ENCODE measurements at regions of chr2 and their contacts with region 1.

Region 1: DNA sequence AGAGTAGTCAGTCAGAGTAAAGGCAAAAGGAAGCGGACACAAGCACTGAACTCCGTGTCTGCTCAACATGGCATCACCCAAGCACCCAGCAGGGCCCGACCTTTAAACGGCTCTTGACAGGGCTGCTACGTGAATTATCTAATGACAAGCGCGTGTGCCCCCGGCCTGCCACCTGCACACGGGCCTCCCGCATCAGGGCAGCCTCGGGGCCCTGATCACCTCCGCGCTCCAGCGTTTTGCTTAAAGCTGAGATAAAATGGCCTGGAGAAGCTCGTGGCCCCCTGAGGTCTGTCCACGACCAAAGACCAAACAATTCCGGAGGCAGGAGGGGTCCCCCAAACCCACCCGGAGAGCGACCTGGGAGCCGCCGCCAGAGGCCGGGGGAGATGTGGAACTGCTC is 376 bp downstream of the NDUFA10 start:
- DNase-seq: no peak
- ATAC-seq: peak; percentile 23
- H3K4me3 ChIP-seq: peak overlapping the region; percentile 81
- H3K27ac ChIP-seq: no peak overlapping the region
- H3K4me1 ChIP-seq: peaks cover 17% of the 10 kb centered on the region; the same call in 1 of the 2 replicates
- H3K27me3 ChIP-seq: no peaks in the 10 kb centered on the region
- CTCF ChIP-seq: no peak

Region 2: DNA sequence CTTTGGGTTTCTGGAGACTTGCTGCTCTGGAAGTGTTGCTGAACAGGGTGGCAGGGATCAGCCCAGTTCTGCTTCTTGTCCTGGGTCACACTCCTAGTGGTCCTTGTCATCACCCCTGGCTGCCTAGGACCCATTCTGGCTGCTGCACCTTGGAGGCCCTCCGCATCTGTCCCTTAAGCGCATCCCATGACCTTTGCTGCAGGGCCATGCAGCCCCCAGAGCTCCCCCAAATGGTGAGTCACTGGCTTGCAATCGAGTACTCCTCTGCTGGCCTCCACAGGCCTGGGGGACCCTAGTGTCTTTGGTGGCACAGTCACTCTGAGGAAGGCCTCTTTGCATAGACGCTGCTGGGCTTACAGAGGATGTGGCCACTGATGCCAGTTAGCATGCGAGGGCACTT is 1409.6 kb before region 1 on chr2:
- CTCF ChIA-PET with region 1: no interaction called
- POLR2A ChIA-PET with region 1: interaction called, 12 read pairs
- intact Hi-C with region 1: no loop called
- DNase-seq: no peak
- ATAC-seq: no peak
- H3K4me3 ChIP-seq: no peak overlapping the region
- H3K27ac ChIP-seq: no peak overlapping the region
- H3K4me1 ChIP-seq: no peaks in the 10 kb centered on the region
- H3K27me3 ChIP-seq: no peaks in the 10 kb centered on the region
- CTCF ChIP-seq: no peak

Region 3: DNA sequence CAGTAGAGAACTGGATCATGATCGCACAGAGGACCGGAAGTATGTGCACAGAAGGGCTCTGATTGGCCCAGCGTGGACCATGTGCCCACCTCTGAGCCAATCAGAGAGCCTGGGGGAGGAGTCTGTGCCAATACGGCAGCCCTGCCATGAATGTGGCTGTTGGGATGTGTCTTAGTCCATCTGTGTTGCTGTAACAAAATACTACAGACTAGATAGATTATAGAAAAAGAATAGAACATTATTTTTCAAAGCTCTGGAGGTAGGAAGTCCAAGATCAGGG is 131.6 kb before region 1 on chr2:
- CTCF ChIA-PET with region 1: no interaction called
- POLR2A ChIA-PET with region 1: no interaction called
- intact Hi-C with region 1: no loop called
- DNase-seq: no peak
- ATAC-seq: no peak
- H3K4me3 ChIP-seq: no peak overlapping the region
- H3K27ac ChIP-seq: no peak overlapping the region
- H3K4me1 ChIP-seq: no peaks in the 10 kb centered on the region
- H3K27me3 ChIP-seq: peaks cover 19% of the 10 kb centered on the region; the same call in 1 of the 2 replicates
- CTCF ChIP-seq: no peak

Region 4: DNA sequence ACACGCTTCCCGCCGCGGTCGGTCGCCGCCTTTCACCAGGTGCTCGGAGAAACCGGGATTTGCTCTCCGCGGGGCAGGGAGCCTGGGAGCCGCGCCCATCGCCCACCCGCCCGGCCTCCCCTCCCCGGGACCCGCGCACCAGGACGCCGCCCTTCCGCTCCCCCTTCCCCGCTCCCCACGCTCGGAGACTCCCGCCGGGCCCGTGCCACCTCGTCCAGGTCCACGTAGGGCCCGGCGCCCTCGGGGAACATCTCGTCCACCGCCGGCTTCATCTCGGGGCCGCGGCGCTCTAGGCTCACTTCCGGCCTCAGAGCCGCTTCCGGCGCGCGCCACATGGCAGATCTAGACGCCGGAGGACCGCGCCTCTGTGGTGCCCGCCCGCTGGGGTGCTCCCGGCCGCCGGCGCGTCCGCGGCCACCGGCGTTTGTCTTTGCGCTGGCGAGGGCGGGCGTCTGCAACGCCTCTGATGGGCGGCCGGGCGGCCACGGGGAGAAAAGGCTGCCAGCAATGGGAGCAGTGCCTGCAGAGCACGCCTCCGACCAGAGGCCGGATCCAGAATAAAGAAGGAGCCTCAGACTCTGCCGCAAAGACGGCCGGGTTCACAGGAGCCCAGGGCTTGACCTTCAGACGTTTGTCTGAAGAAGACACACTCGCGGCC is 111.4 kb after region 1 on chr2 and contains the start of gene COPS9:
- CTCF ChIA-PET with region 1: no interaction called
- POLR2A ChIA-PET with region 1: no interaction called
- intact Hi-C with region 1: loop called (anchors 1 kb)
- DNase-seq: peak; percentile 80
- ATAC-seq: peak; percentile 88
- H3K4me3 ChIP-seq: peak within 1 kb of the TSS; percentile 99
- H3K27ac ChIP-seq: no peak within 1 kb of the TSS
- H3K4me1 ChIP-seq: peaks cover 24% of the 10 kb centered on the region
- H3K27me3 ChIP-seq: no peaks in the 10 kb centered on the region
- CTCF ChIP-seq: no peak
- total RNA-seq, gene COPS9: 317 and 473 TPM in 2 replicates